ENCODE measurements at regions of chr11 and their contacts with region 1.

Region 1: GRCh38 chr11:67656278-67656922 is 5.9 kb upstream of the ACY3 start:
- DNase-seq: peak in 1 of 2 experiments; percentile 59
- ATAC-seq: no peak
- H3K4me3 ChIP-seq: no peak overlapping the region
- H3K27ac ChIP-seq: no peak overlapping the region
- H3K4me1 ChIP-seq: peaks cover 10% of the 10 kb centered on the region; the same call in 1 of the 3 replicates
- CTCF ChIP-seq: no peak
- EP300 ChIP-seq: no peak
- POLR2A ChIP-seq: no peak
- RAD21 ChIP-seq: no peak

Region 2: GRCh38 chr11:67312187-67313103 is 344.0 kb before region 1 on chr11:
- CTCF ChIA-PET with region 1: no interaction called
- POLR2A ChIA-PET with region 1: no interaction called
- DNase-seq: peak in 1 of 2 experiments; percentile 57
- ATAC-seq: no peak
- H3K4me3 ChIP-seq: no peak overlapping the region
- H3K27ac ChIP-seq: peak overlapping the region in 1 of 2 experiments; percentile 1; a peak in 1 of 6 replicates
- H3K4me1 ChIP-seq: peaks cover 8% of the 10 kb centered on the region; the same call in 2 of the 3 replicates
- CTCF ChIP-seq: no peak
- EP300 ChIP-seq: no peak
- POLR2A ChIP-seq: no peak
- RAD21 ChIP-seq: no peak

Region 3: GRCh38 chr11:67523556-67524479 is 132.6 kb before region 1 on chr11:
- CTCF ChIA-PET with region 1: no interaction called
- POLR2A ChIA-PET with region 1: no interaction called
- DNase-seq: no peak
- ATAC-seq: peak; percentile 27 to 56; a peak in 3 of 6 replicates
- H3K4me3 ChIP-seq: no peak overlapping the region
- H3K27ac ChIP-seq: no peak overlapping the region
- H3K4me1 ChIP-seq: no peaks in the 10 kb centered on the region
- CTCF ChIP-seq: no peak
- EP300 ChIP-seq: no peak
- POLR2A ChIP-seq: no peak
- RAD21 ChIP-seq: no peak

Region 4: DNA sequence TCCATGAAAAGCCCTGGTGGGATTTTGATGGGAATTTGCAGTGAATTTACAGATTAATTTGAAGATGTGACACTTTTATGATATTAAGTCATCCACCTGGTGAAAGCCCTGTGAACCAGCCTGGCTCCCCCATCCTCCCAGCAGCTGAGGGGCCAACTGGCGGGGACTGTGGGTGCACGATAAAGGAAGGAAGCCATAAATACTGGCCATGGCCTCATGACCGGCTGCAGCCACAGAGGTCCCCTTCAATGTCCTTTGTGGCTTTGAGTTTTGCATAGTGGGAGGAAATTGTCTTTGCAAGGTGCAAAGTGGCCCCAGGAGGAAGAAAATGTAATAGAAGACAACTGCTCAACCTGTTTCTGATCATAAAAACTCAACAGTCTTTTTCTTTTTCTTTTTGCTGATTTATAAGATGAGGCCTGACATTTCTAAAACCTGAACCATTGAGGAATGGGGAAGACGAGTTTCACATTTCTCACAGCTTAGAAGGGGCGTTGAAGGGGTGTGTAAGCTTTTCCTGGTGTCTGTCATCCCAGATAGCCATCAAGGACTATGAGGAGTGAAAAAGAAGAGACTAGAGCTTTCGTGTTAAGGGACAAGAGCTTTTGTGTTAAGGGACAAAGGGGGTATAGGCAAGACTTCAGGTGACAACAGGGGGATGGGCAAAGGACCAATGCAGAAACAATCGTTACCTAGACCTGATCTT is 55.9 kb before region 1 on chr11:
- CTCF ChIA-PET with region 1: no interaction called
- POLR2A ChIA-PET with region 1: no interaction called
- DNase-seq: no peak
- ATAC-seq: no peak
- H3K4me3 ChIP-seq: no peak overlapping the region
- H3K27ac ChIP-seq: no peak overlapping the region
- H3K4me1 ChIP-seq: peaks cover under 1% of the 10 kb centered on the region; the same call in 1 of the 3 replicates
- CTCF ChIP-seq: no peak
- EP300 ChIP-seq: no peak
- POLR2A ChIP-seq: no peak
- RAD21 ChIP-seq: no peak

Region 5: GRCh38 chr11:67640021-67640757 is 16.2 kb before region 1 on chr11:
- CTCF ChIA-PET with region 1: interaction called, 150 read pairs
- POLR2A ChIA-PET with region 1: no interaction called
- DNase-seq: peak; percentile 71 to 77
- ATAC-seq: peak; percentile 78 to 93
- H3K4me3 ChIP-seq: no peak overlapping the region
- H3K27ac ChIP-seq: no peak overlapping the region
- H3K4me1 ChIP-seq: no peaks in the 10 kb centered on the region
- CTCF ChIP-seq: peak; percentile 61
- EP300 ChIP-seq: no peak
- POLR2A ChIP-seq: no peak
- RAD21 ChIP-seq: peak; percentile 45 to 54

Region 6: DNA sequence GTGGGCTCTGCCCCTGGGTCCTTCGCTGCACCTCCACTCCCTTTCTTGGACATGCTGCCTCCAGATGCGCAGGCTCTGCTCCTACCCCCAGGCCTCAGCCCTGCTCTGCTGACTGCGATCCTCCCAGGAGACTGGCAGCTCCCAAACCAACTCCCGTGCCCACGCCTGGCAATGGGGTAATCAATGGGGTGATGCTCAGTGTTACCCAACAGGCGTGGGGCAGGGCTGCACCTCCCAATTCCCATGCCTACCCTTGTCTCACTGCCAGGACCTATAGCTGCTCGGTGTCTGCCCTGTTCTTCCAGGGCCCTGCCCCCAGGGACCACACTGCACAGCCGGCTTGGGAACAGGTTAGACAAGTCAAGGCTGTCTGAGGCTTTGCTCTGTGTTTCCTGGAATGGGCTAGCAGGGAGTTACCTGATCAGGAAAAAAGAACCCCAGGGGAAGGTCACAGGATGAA is 18.1 kb after region 1 on chr11 and contains the start of gene ALDH3B2:
- CTCF ChIA-PET with region 1: interaction called, 41 read pairs
- POLR2A ChIA-PET with region 1: no interaction called
- DNase-seq: no peak
- ATAC-seq: no peak
- H3K4me3 ChIP-seq: no peak within 1 kb of the TSS
- H3K27ac ChIP-seq: no peak within 1 kb of the TSS
- H3K4me1 ChIP-seq: no peaks in the 10 kb centered on the region
- CTCF ChIP-seq: no peak
- EP300 ChIP-seq: no peak
- POLR2A ChIP-seq: no peak
- RAD21 ChIP-seq: no peak
- polyA plus RNA-seq, gene ALDH3B2: not detected in 2 replicates

Measured in A549 (cell line).